Esophagus muscularis mucosa (tissue), 4 donors: ENCODE measurements at regions of chr14 and their contacts with region 1.

Region 1: GRCh38 chr14:59422069-59422881 is 42.9 kb downstream of the GPR135 start:
- DNase-seq: no peak
- H3K4me3 ChIP-seq: no peak overlapping the region
- H3K27ac ChIP-seq: peak overlapping the region in 1 of 4 donors; percentile 33
- H3K4me1 ChIP-seq: peaks cover 23 to 59% (median 50%) of the 10 kb centered on the region in 4 donors
- H3K27me3 ChIP-seq: no peaks in the 10 kb centered on the region
- CTCF ChIP-seq: no peak
- EP300 ChIP-seq: no peak
- POLR2A ChIP-seq: no peak

Region 2: GRCh38 chr14:59150990-59151389 is 271.3 kb before region 1 on chr14:
- intact Hi-C with region 1: no loop called
- DNase-seq: no peak
- H3K4me3 ChIP-seq: no peak overlapping the region
- H3K27ac ChIP-seq: no peak overlapping the region
- H3K4me1 ChIP-seq: no peaks in the 10 kb centered on the region
- H3K27me3 ChIP-seq: no peaks in the 10 kb centered on the region
- CTCF ChIP-seq: no peak
- EP300 ChIP-seq: no peak
- POLR2A ChIP-seq: no peak

Region 3: DNA sequence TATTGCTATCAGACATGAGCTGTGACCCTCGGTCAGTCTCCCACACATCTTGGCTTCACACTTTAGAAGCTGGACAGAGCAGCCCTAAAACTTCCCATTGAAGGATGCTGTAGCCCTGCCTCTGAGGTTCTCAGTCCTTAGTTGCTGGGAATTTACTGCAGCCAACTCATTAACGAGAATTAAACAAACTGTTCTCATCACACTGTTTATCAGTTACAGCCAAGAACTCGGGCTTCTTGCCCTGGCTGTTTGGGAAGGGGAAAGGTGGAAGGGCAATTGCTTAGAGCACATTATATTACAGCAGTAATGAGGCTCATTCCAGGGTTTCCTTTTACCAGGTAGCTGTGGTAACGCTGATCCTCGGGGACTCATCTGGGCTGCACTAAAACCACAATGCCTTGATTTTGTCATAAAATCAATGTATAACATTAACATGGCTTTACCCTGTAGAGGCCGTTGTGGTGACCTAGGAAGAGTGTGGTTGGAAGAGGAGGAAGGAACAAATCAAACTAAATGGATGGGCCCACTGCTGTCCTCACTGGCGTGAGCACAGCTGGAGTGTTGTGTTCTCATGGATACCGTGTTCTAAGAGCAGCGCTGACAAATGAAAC is 44.2 kb before region 1 on chr14:
- intact Hi-C with region 1: loop called (anchors 5 kb)
- DNase-seq: no peak
- H3K4me3 ChIP-seq: no peak overlapping the region
- H3K27ac ChIP-seq: peak overlapping the region; percentile 75 to 87 (median 78)
- H3K4me1 ChIP-seq: peaks cover 9 to 42% (median 38%) of the 10 kb centered on the region in 4 donors
- H3K27me3 ChIP-seq: no peaks in the 10 kb centered on the region
- CTCF ChIP-seq: no peak
- EP300 ChIP-seq: peak; percentile 81
- POLR2A ChIP-seq: no peak